ENCODE measurements at regions of chr7 and their contacts with region 1.

Region 1: DNA sequence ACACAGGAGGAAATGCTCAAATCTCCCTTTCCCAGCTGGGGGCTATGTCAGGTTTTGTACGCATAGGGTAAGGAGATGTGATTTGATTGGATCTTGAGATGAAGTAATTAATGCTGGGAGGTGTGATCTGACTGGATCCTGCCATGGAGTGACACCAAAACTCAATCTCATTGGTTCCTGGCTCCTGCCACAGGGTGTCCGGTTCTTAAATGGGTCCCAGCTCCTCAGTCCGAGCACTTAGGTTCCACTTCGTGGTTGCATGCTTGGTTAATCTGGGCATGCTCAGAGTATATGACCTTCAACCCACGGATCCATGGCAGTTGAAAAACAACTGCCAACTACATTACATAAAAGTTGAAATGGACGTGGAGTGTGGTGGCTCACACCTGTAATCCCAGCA is 3.1 kb upstream of the ZNF12 start:
- DNase-seq: no peak
- H3K4me3 ChIP-seq: no peak overlapping the region
- H3K27ac ChIP-seq: no peak overlapping the region
- H3K4me1 ChIP-seq: peaks cover 0 to 21% (median 15%) of the 10 kb centered on the region in 4 donors
- H3K27me3 ChIP-seq: peaks cover 0 to 4% of the 10 kb centered on the region in 2 donors
- CTCF ChIP-seq: no peak

Region 2: GRCh38 chr7:6447581-6448199 is 262.1 kb before region 1 on chr7 and contains the start of gene DAGLB:
- intact Hi-C with region 1: no loop called
- DNase-seq: peak; percentile 86 to 96
- H3K4me3 ChIP-seq: peak within 1 kb of the TSS; percentile 70 to 76
- H3K27ac ChIP-seq: peak within 1 kb of the TSS; percentile 84 to 89
- H3K4me1 ChIP-seq: peaks cover 0 to 21% (median 10%) of the 10 kb centered on the region in 4 donors
- H3K27me3 ChIP-seq: no peaks in the 10 kb centered on the region
- CTCF ChIP-seq: no peak

Region 3: DNA sequence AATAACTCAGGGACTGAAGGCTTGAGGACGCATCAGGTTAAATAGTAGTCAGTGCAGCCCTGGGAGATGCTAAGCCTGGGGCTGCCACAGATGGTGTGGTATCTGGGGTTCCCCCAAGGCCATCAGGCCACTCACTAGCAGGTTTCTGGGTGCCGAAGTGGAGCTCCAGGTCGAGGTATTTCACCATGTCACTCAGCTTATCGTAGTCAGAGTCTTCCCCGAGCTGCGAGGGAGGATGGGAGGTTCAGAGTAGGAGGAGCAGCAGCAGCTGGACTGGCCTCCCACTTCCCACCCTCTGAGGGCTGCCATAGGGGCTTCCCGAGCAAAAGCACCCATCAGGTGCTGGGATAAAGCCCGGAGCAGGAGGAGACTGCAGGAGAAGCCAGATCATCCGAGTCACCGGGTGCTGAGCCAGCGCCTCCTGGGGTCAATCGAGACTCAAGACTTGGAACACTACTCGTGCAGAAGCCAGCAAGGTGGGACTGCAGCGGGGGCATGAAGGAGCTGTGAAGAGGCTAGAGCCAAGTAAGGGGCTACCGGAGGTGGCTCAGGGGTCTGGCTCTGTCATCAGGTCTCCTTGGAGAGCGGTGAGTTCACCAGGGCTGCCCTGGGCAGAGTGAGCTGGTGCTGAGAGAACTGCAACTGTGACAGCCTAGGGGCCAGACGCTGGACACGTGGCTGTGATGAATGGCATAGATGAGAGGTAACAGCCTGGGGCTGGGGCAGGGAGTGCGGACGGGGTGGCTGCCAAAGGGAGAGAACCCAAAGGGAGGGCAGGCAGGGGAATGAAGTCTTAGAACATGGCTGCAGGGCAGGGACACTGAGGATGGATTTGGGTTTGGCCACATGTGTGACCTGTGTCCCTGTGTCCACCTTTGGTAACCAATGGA is 203.9 kb before region 1 on chr7:
- intact Hi-C with region 1: no loop called
- DNase-seq: no peak
- H3K4me3 ChIP-seq: no peak overlapping the region
- H3K27ac ChIP-seq: no peak overlapping the region
- H3K4me1 ChIP-seq: peaks cover 0 to 18% (median 13%) of the 10 kb centered on the region in 4 donors
- H3K27me3 ChIP-seq: peaks cover 0 to 2% of the 10 kb centered on the region in 2 donors
- CTCF ChIP-seq: no peak

Region 4: GRCh38 chr7:6640246-6640721 is 69.5 kb before region 1 on chr7:
- intact Hi-C with region 1: loop called (anchors 10 kb)
- DNase-seq: no peak
- H3K4me3 ChIP-seq: no peak overlapping the region
- H3K27ac ChIP-seq: no peak overlapping the region
- H3K4me1 ChIP-seq: peaks cover 0 to 40% (median 19%) of the 10 kb centered on the region in 4 donors
- H3K27me3 ChIP-seq: no peaks in the 10 kb centered on the region
- CTCF ChIP-seq: no peak

Region 5: DNA sequence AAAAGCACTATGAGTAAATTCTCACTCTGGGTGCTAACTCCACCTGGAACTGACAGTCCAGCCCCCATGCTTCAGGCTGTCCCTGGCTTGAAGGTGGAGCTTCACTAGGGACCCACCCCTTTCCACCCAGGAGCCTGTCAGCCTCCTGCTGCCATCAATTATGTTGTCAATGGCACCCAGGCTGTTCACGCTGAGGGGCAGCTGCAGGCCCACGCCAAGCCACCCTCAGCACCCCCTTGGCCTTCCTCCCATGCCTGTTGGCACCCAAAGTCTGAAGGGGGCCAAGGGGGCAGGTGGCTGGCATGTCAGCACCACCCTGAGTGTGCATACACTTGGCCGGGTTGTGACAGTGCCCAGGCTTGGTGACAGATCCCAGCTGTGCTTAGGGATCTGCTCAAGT is 1872.9 kb after region 1 on chr7:
- intact Hi-C with region 1: no loop called
- DNase-seq: no peak
- H3K4me3 ChIP-seq: no peak overlapping the region
- H3K27ac ChIP-seq: no peak overlapping the region
- H3K4me1 ChIP-seq: no peaks in the 10 kb centered on the region
- H3K27me3 ChIP-seq: no peaks in the 10 kb centered on the region
- CTCF ChIP-seq: no peak

Measured in tibial artery (tissue), 4 donors.